Psoas muscle (tissue), 8 donors: ENCODE measurements at regions of chr13 and their contacts with region 1.

Region 1: GRCh38 chr13:113252516-113253095 is 43.2 kb downstream of the CUL4A start:
- DNase-seq: no peak
- ATAC-seq: no peak
- H3K4me3 ChIP-seq: no peak overlapping the region
- H3K27ac ChIP-seq: no peak overlapping the region
- H3K4me1 ChIP-seq: no peaks in the 10 kb centered on the region
- H3K27me3 ChIP-seq: no peaks in the 10 kb centered on the region
- CTCF ChIP-seq: no peak

Region 2: GRCh38 chr13:113153810-113154748 is 98.5 kb before region 1 on chr13:
- intact Hi-C with region 1: no loop called
- DNase-seq: peak; percentile 83 to 91
- ATAC-seq: peak; percentile 79 to 85 (median 82)
- H3K4me3 ChIP-seq: peak overlapping the region; percentile 68
- H3K27ac ChIP-seq: peak overlapping the region; percentile 86
- H3K4me1 ChIP-seq: peaks cover 11% of the 10 kb centered on the region
- H3K27me3 ChIP-seq: no peaks in the 10 kb centered on the region
- CTCF ChIP-seq: no peak

Region 3: DNA sequence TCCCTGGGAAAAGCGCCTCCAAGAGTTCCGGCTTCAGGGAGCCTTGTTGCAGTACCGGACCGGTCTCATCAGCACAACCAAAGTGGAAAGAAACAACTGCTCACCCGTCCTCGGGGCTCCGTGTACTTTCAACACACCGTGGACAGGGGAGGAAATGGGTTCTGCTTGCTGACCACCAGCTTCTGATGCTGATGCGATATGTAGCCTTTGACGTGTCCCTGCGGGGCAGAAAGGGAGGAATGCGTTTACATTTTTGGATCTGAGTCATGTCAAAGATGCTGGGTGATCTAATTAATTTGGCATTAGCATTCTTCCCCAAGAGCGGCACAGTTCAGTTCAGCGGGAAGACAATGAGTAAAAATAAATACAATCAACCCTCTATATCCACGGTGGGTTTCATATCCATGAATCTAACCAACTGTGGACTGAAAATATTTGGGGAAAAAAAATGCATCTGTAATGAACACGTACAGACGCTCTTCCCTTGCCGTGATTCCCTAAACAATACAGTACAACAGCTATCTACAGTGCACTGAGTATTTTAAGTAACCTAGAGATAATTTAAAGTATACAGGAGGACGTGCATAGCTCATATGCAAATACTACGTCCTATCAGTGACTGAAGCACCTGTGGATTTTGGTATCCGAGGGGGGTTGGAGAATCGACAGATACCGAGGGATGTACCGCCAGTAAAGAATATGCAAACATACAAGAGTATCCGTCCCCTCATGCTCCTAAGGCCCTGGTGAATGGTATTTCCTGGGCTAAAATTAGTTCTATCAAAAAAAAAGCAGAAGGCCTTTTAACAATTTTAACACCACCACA is 74.3 kb before region 1 on chr13:
- intact Hi-C with region 1: loop called in 1 of 2 experiments (anchors 5 kb)
- DNase-seq: no peak
- ATAC-seq: no peak
- H3K4me3 ChIP-seq: no peak overlapping the region
- H3K27ac ChIP-seq: no peak overlapping the region
- H3K4me1 ChIP-seq: no peaks in the 10 kb centered on the region
- H3K27me3 ChIP-seq: no peaks in the 10 kb centered on the region
- CTCF ChIP-seq: no peak